Endothelial cell of umbilical vein (primary cell): ENCODE measurements at regions of chr1 and their contacts with region 1.

Region 1: DNA sequence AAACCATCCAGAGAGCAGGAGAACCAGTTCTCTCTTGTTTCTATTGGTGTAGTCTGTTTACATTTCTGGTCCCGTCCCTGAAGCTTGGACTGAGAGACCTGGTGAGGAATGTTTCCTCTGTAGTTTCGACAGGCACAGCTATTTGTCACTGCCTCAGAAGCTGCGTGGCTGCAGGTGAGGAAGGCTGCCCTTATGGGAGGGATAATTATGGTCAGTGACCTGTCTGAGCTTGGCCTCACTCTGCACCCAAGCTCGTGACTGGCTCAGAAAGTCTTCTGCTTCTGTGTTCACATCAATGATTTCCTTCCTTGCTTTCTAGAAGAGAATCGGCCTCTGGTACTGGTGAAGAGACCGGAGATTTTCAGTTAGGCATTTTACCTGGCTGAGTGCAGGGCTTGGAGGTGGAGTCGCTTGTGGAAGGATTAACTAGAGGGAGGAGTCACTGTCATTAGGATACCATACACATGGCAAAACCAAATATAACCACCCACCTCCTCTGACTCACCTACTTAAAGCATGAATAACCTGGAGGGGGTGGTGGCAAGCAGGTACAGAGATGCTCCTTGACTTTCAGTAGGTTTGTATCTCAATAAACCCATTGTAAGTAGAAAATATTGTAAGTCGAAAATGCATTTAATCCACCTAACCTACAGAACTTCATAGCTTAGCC is 19.9 kb upstream of the WDR26 start:
- DNase-seq: no peak
- H3K4me3 ChIP-seq: no peak overlapping the region
- H3K27ac ChIP-seq: no peak overlapping the region
- H3K4me1 ChIP-seq: peaks cover 21% of the 10 kb centered on the region
- H3K27me3 ChIP-seq: no peaks in the 10 kb centered on the region
- CTCF ChIP-seq: no peak
- POLR2A ChIP-seq: no peak

Region 2: GRCh38 chr1:224080115-224080774 is 374.3 kb before region 1 on chr1:
- CTCF ChIA-PET with region 1: no interaction called
- POLR2A ChIA-PET with region 1: no interaction called
- dilution Hi-C with region 1: no loop called
- intact Hi-C with region 1: no loop called
- DNase-seq: peak; percentile 38
- H3K4me3 ChIP-seq: no peak overlapping the region
- H3K27ac ChIP-seq: no peak overlapping the region
- H3K4me1 ChIP-seq: peaks cover 8% of the 10 kb centered on the region
- H3K27me3 ChIP-seq: no peaks in the 10 kb centered on the region
- CTCF ChIP-seq: no peak
- POLR2A ChIP-seq: no peak

Region 3: DNA sequence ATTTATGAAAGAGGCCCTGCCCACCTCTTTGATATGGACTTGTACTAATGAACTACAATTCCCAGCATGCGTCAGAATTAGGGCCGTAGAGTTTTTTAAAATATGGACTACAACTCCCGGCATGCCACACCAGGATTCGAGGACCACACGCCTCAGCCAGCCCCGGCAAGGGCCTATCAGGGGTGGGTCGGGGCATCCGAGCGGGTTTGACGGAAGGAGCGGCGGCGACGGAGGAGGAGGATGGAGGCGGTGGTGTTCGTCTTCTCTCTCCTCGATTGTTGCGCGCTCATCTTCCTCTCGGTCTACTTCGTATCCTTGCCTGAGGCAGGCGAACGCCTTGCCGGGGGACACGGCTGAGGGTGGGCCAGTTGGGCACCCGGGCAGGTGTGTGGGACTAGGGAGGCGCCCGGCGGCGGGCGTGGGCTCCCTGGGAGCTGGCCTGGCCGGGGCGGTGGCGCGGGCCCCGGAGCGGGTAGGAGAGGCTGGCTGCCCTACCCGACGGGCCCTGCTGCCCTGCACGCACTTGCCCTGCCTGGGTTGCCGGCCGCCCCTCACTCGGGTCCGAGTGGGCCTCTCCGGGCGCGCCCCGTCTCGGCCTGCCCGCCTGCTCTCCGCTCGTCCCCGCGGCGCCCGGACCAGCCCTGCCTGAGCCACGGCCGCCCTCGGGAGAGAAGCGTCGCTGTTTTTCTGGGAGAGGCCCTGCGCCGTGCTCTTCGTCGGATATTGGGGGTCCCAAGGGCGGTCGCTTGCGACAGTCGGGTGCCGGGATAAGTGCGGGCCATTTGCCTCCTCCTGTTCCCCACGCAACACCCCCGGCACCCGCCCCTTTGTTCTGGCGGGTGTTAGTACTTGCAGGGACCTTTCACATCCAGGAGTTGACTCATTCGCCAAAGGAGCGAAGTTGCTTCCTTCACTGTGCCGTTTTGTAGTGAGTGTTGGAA is 97.6 kb before region 1 on chr1 and contains the start of gene CNIH4:
- CTCF ChIA-PET with region 1: no interaction called
- POLR2A ChIA-PET with region 1: no interaction called
- dilution Hi-C with region 1: no loop called
- intact Hi-C with region 1: loop called (anchors 5 kb)
- DNase-seq: peak; percentile 95
- H3K4me3 ChIP-seq: peak within 1 kb of the TSS; percentile 67 to 71 (median 69)
- H3K27ac ChIP-seq: peak within 1 kb of the TSS; percentile 42
- H3K4me1 ChIP-seq: peaks cover 10% of the 10 kb centered on the region
- H3K27me3 ChIP-seq: no peaks in the 10 kb centered on the region
- CTCF ChIP-seq: no peak
- POLR2A ChIP-seq: peak; percentile 92
- total RNA-seq, gene CNIH4: 74.9 and 84.8 TPM in 2 replicates

Region 4: GRCh38 chr1:224411766-224412165 is 42.8 kb before region 1 on chr1:
- CTCF ChIA-PET with region 1: interaction called, 14 read pairs
- POLR2A ChIA-PET with region 1: no interaction called
- dilution Hi-C with region 1: no loop called
- intact Hi-C with region 1: no loop called
- DNase-seq: no peak
- H3K4me3 ChIP-seq: no peak overlapping the region
- H3K27ac ChIP-seq: no peak overlapping the region
- H3K4me1 ChIP-seq: no peaks in the 10 kb centered on the region
- H3K27me3 ChIP-seq: no peaks in the 10 kb centered on the region
- CTCF ChIP-seq: no peak
- POLR2A ChIP-seq: no peak

Region 5: DNA sequence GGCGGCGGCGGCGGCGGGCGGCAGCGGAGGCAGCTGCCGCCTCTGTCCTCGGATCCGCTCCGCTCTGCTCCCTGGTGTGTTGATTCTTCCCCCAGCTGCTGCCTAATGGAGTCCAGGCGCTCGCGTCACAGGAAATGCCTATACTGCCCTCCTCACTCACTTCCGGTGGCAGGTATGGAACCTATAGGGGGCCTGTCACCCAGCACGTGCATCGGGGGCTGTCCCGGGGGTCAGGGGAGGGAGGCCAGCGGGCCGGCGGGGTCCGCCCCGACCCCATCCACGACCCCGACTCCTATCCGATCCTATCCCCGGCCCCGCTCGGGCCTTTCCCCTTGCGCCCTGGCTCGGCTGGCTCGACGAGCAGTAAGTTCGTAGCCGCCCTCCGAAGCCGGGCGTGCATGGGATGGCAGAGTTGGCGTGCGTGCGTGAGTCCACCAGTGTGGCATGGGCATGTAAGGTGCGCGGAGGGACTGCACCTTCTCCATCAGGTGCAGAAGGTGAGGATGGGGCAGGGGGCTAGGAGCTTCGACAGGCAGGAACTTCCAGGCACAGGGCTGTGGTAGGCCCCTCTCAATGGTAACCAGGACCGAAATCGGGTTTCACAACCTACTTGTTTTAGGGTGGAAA is 19.7 kb before region 1 on chr1 and contains the start of gene WDR26:
- CTCF ChIA-PET with region 1: interaction called, 92 read pairs
- POLR2A ChIA-PET with region 1: interaction called, 11 read pairs
- dilution Hi-C with region 1: no loop called
- intact Hi-C with region 1: loop called (anchors 2 kb)
- DNase-seq: peak; percentile 81
- H3K4me3 ChIP-seq: peak within 1 kb of the TSS; percentile 24 to 100 (median 88)
- H3K27ac ChIP-seq: peak within 1 kb of the TSS; percentile 69
- H3K4me1 ChIP-seq: peaks cover 36% of the 10 kb centered on the region
- H3K27me3 ChIP-seq: no peaks in the 10 kb centered on the region
- CTCF ChIP-seq: peak in 1 of 2 donors; percentile 3
- POLR2A ChIP-seq: peak; percentile 88
- total RNA-seq, gene WDR26: 90.1 and 92.4 TPM in 2 replicates

Region 6: GRCh38 chr1:224503161-224504118 is 48.9 kb after region 1 on chr1:
- CTCF ChIA-PET with region 1: interaction called, 22 read pairs
- POLR2A ChIA-PET with region 1: no interaction called
- dilution Hi-C with region 1: no loop called
- intact Hi-C with region 1: loop called (anchors 1 kb)
- DNase-seq: peak; percentile 93
- H3K4me3 ChIP-seq: no peak overlapping the region
- H3K27ac ChIP-seq: peak overlapping the region; percentile 23
- H3K4me1 ChIP-seq: peaks cover 28% of the 10 kb centered on the region
- H3K27me3 ChIP-seq: no peaks in the 10 kb centered on the region
- CTCF ChIP-seq: peak in 1 of 2 donors; percentile 27
- POLR2A ChIP-seq: no peak

Region 7: GRCh38 chr1:224922404-224923164 is 468.1 kb after region 1 on chr1:
- CTCF ChIA-PET with region 1: interaction called, 13 read pairs
- POLR2A ChIA-PET with region 1: no interaction called
- dilution Hi-C with region 1: no loop called
- intact Hi-C with region 1: no loop called
- DNase-seq: peak; percentile 24
- H3K4me3 ChIP-seq: no peak overlapping the region
- H3K27ac ChIP-seq: no peak overlapping the region
- H3K4me1 ChIP-seq: no peaks in the 10 kb centered on the region
- H3K27me3 ChIP-seq: peaks cover 0 to 4% of the 10 kb centered on the region in 2 experiments
- CTCF ChIP-seq: peak; percentile 44 to 45
- POLR2A ChIP-seq: no peak